ENCODE measurements at regions of chr17 and their contacts with region 1.

Region 1: DNA sequence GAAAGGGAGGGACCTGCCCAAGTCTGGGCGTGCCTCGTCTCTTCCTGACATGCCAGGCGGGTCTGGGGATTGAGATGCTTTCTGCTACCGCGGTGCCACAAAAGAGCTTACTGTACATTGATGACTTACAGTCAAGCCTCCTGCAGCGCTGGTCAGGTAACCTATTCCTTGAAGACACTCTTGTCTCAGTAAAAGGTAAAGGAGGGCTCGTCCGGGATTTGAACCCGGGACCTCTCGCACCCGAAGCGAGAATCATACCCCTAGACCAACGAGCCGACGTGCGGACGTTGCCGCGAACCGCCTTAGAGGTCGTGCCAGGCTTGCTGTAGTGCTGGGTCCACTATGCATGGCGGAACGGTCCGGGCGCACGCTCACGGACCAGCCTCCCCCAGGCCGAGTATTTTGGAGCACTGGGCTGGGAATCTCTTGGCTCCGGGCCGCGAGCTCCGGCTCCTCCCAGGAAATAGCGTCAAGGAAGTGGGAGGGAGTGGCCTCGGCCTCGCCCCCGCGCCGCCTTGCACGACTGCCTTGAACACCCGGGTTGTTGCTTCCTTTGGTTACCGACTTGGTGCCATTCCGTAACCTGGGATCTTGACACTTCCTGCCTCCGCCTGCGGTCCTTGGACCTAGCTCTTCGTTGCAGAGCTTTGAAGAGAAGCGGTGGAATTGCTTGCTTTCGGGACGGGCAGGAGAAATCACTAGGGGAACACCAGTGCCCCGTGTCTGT is 12.4 kb upstream of the AURKB start:
- DNase-seq: peak; percentile 88 to 92 (median 91)
- ATAC-seq: peak; percentile 66
- H3K4me3 ChIP-seq: peak overlapping the region; percentile 99
- H3K4me3 Mint-ChIP-seq: peak overlapping the region; percentile 86 to 99 (median 92)
- H3K27ac ChIP-seq: peak overlapping the region; percentile 83
- H3K27ac Mint-ChIP-seq: peak overlapping the region; percentile 95 to 100 (median 99)
- H3K4me1 ChIP-seq: peaks cover 23 to 26% of the 10 kb centered on the region in 2 donors
- H3K4me1 Mint-ChIP-seq: peaks cover 30 to 81% (median 70%) of the 10 kb centered on the region in 7 donors
- H3K27me3 ChIP-seq: no peaks in the 10 kb centered on the region
- H3K27me3 Mint-ChIP-seq: peaks cover 0 to 17% (median 0%) of the 10 kb centered on the region in 5 donors

Region 2: GRCh38 chr17:7745748-7746470 is 476.9 kb before region 1 on chr17:
- CTCF ChIA-PET with region 1: no interaction called
- POLR2A ChIA-PET with region 1: no interaction called
- intact Hi-C with region 1: no loop called
- DNase-seq: no peak
- ATAC-seq: no peak
- H3K4me3 ChIP-seq: no peak overlapping the region
- H3K4me3 Mint-ChIP-seq: no peak overlapping the region
- H3K27ac ChIP-seq: no peak overlapping the region
- H3K27ac Mint-ChIP-seq: no peak overlapping the region
- H3K4me1 ChIP-seq: no peaks in the 10 kb centered on the region
- H3K4me1 Mint-ChIP-seq: peaks cover 0 to 2% (median 0%) of the 10 kb centered on the region in 7 donors
- H3K27me3 ChIP-seq: no peaks in the 10 kb centered on the region
- H3K27me3 Mint-ChIP-seq: peaks cover 2 to 18% (median 10%) of the 10 kb centered on the region in 5 donors

Region 3: DNA sequence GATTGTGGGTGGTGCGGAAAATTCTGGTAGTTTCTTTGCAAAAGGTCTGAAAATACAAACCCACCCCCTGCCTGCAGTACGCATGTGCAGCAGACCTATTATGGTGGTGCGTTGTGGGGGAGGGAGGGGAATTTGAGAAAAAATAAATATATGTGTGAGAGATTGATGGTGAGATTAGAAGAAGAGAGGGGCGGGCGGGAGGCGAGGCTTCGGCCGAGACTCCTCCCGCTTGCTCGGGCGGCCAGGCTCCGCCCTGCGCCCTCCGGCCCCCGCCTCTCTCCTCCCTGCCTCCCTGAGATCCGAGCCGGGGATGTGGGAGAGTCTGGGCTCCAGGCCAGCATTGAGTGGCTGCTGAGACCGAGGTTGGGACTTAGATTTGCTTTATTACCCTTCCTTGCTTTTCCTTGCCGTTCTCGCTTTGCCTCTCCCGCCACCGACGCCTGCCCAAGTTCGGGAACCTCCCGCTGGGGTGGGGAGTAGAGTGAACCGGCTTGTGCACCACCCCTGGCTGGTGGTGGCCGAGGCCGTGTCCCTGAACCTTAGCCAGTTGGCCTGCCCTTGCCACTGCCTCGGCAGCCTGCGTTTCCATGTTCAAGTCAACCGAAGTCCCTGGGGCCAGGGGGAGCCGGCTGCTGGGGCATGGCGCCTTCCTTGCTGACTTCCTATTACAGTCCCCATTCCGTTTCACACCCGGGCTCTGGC is 335.2 kb before region 1 on chr17:
- CTCF ChIA-PET with region 1: no interaction called
- POLR2A ChIA-PET with region 1: no interaction called
- intact Hi-C with region 1: loop called in 1 of 2 experiments (anchors 10 kb)
- DNase-seq: peak; percentile 41 to 96 (median 93)
- ATAC-seq: peak; percentile 83
- H3K4me3 ChIP-seq: peak overlapping the region; percentile 61
- H3K4me3 Mint-ChIP-seq: no peak overlapping the region
- H3K27ac ChIP-seq: peak overlapping the region; percentile 91
- H3K27ac Mint-ChIP-seq: no peak overlapping the region
- H3K4me1 ChIP-seq: peaks cover 28 to 29% of the 10 kb centered on the region in 2 donors
- H3K4me1 Mint-ChIP-seq: peaks cover 0 to 17% (median 8%) of the 10 kb centered on the region in 7 donors
- H3K27me3 ChIP-seq: no peaks in the 10 kb centered on the region
- H3K27me3 Mint-ChIP-seq: no peaks in the 10 kb centered on the region

Region 4: DNA sequence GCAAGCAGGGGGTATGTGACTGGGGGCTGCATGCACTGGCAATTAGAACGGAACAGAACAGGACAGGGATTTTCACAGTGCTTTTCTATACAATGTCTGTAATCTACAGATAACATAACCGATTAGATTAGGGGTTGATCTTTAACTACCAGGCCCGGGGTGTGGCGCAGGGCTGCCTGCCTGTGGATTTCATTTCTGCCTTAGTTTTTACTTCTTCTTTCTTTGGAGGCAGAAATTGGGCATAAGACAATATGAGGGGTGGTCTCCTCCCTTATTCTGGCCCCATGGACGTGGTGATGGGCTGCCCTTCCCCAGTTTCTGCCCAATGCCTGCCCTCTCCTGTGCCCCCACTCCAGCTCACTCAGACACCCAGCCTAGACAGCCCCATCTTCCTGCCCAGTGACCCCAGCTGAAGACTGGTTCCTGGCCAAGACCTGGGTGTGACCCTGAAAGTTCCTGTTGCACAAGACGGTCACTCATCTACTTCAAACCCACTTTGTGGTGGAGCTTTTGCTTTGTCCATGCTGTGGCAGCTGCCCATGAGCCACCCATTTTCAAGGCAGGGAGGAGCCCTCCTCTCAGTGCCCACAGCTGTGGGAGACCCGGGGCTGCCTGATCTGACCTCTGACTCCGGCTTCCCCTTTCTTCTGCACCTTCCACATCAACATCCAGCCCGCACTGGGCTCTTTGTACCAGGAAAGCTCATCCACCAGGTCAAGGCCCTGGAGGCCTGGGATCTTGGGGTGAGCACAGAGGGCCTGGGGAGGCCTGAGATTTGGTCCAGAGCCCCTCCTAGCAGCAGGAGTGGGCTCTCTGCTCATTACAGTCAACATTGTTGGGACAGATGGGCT is 153.8 kb before region 1 on chr17:
- CTCF ChIA-PET with region 1: no interaction called
- POLR2A ChIA-PET with region 1: no interaction called
- intact Hi-C with region 1: no loop called
- DNase-seq: no peak
- ATAC-seq: peak; percentile 77
- H3K4me3 ChIP-seq: no peak overlapping the region
- H3K4me3 Mint-ChIP-seq: no peak overlapping the region
- H3K27ac ChIP-seq: no peak overlapping the region
- H3K27ac Mint-ChIP-seq: peak overlapping the region in 2 of 9 donors; percentile 30 to 37
- H3K4me1 ChIP-seq: peaks cover 4 to 17% of the 10 kb centered on the region in 2 donors
- H3K4me1 Mint-ChIP-seq: peaks cover 7 to 20% (median 17%) of the 10 kb centered on the region in 7 donors
- H3K27me3 ChIP-seq: peaks cover 0 to 6% of the 10 kb centered on the region in 2 donors
- H3K27me3 Mint-ChIP-seq: peaks cover 6 to 65% (median 20%) of the 10 kb centered on the region in 5 donors

Region 5: GRCh38 chr17:8151123-8151640 is 71.6 kb before region 1 on chr17:
- CTCF ChIA-PET with region 1: interaction called, 5 read pairs
- POLR2A ChIA-PET with region 1: interaction called, 154 read pairs
- intact Hi-C with region 1: loop called (anchors 1 to 2 kb)
- DNase-seq: peak; percentile 89 to 96 (median 93)
- ATAC-seq: peak; percentile 67
- H3K4me3 ChIP-seq: peak overlapping the region; percentile 80
- H3K4me3 Mint-ChIP-seq: peak overlapping the region in 6 of 10 donors; percentile 64 to 95 (median 91)
- H3K27ac ChIP-seq: peak overlapping the region; percentile 95
- H3K27ac Mint-ChIP-seq: peak overlapping the region in 2 of 9 donors; percentile 96 to 99
- H3K4me1 ChIP-seq: peaks cover 50 to 53% of the 10 kb centered on the region in 2 donors
- H3K4me1 Mint-ChIP-seq: peaks cover 0 to 68% (median 45%) of the 10 kb centered on the region in 7 donors
- H3K27me3 ChIP-seq: no peaks in the 10 kb centered on the region
- H3K27me3 Mint-ChIP-seq: no peaks in the 10 kb centered on the region

Region 6: DNA sequence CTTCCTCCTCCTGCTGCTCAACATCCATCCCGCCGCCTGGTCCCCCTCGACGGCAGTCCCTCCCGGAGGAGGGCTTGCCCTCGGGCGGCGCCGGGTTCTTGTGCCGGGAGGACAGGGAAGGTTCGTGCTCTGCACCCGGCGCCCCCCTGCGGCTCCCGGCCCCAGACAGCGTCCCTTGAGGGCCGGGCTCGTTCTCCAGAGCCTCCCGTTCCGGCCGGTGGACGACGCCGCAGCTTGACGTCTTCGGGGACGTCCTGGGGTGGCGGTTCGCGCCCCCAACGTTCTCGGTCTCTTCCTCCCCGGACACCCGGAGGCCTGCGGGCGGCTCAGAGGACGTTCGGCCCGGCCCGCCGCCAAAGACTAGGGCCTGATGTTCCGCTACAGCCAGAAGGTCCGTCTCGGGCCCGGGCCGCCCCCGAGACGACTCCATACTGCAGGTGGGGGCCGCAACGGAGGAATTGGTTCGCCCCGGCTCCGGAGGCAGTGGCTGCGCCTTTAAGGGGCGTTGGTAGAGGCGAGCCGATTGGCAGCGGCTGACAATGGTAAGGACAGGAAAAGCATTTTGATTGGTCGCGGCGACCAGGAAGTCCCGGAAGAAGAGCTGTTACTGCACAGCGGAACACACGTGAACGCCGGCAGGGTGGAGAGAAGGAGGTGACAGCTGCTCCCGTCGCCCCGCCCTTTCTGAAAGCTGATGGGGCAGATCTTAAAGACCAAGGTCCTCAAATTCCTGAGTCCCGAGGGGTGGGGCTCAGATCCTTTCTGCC is 32.9 kb before region 1 on chr17 and contains the start of gene BORCS6:
- CTCF ChIA-PET with region 1: interaction called, 33 read pairs
- POLR2A ChIA-PET with region 1: interaction called, 389 read pairs
- intact Hi-C with region 1: loop called (anchors 1 kb)
- DNase-seq: peak; percentile 76 to 97 (median 94)
- ATAC-seq: peak; percentile 81
- H3K4me3 ChIP-seq: peak within 1 kb of the TSS; percentile 91
- H3K4me3 Mint-ChIP-seq: peak within 1 kb of the TSS in 2 of 10 donors; percentile 15 to 49
- H3K27ac ChIP-seq: peak within 1 kb of the TSS; percentile 87
- H3K27ac Mint-ChIP-seq: peak within 1 kb of the TSS in 7 of 9 donors; percentile 46 to 94 (median 88)
- H3K4me1 ChIP-seq: peaks cover 33 to 38% of the 10 kb centered on the region in 2 donors
- H3K4me1 Mint-ChIP-seq: peaks cover 8 to 13% (median 13%) of the 10 kb centered on the region in 7 donors
- H3K27me3 ChIP-seq: no peaks in the 10 kb centered on the region
- H3K27me3 Mint-ChIP-seq: no peaks in the 10 kb centered on the region
- total RNA-seq, gene BORCS6: 5.4 to 16.1 (median 13.4) TPM

Region 7: GRCh38 chr17:8248751-8249607 is 26.2 kb after region 1 on chr17 and contains the start of gene PFAS:
- CTCF ChIA-PET with region 1: interaction called, 70 read pairs
- POLR2A ChIA-PET with region 1: interaction called, 436 read pairs
- intact Hi-C with region 1: loop called (anchors 1 kb)
- DNase-seq: peak; percentile 91 to 98 (median 94)
- ATAC-seq: peak; percentile 64
- H3K4me3 ChIP-seq: peak within 1 kb of the TSS; percentile 94
- H3K4me3 Mint-ChIP-seq: peak within 1 kb of the TSS; percentile 92 to 100 (median 99)
- H3K27ac ChIP-seq: peak within 1 kb of the TSS; percentile 100
- H3K27ac Mint-ChIP-seq: peak within 1 kb of the TSS; percentile 97 to 100 (median 100)
- H3K4me1 ChIP-seq: peaks cover 28 to 35% of the 10 kb centered on the region in 2 donors
- H3K4me1 Mint-ChIP-seq: peaks cover 30 to 56% (median 50%) of the 10 kb centered on the region in 7 donors
- H3K27me3 ChIP-seq: no peaks in the 10 kb centered on the region
- H3K27me3 Mint-ChIP-seq: no peaks in the 10 kb centered on the region
- total RNA-seq, gene PFAS: 31.6 to 68.9 (median 31.9) TPM

Region 8: GRCh38 chr17:8275421-8276290 is 52.9 kb after region 1 on chr17:
- CTCF ChIA-PET with region 1: no interaction called
- POLR2A ChIA-PET with region 1: no interaction called
- intact Hi-C with region 1: no loop called
- DNase-seq: no peak
- ATAC-seq: no peak
- H3K4me3 ChIP-seq: no peak overlapping the region
- H3K4me3 Mint-ChIP-seq: no peak overlapping the region
- H3K27ac ChIP-seq: no peak overlapping the region
- H3K27ac Mint-ChIP-seq: peak overlapping the region in 1 of 9 donors; percentile 62
- H3K4me1 ChIP-seq: no peaks in the 10 kb centered on the region
- H3K4me1 Mint-ChIP-seq: peaks cover 0 to 5% (median 0%) of the 10 kb centered on the region in 7 donors
- H3K27me3 ChIP-seq: no peaks in the 10 kb centered on the region
- H3K27me3 Mint-ChIP-seq: no peaks in the 10 kb centered on the region

Region 9: GRCh38 chr17:8435245-8436168 is 212.7 kb after region 1 on chr17 and contains the start of gene NDEL1:
- CTCF ChIA-PET with region 1: no interaction called
- POLR2A ChIA-PET with region 1: no interaction called
- intact Hi-C with region 1: loop called in 1 of 2 experiments (anchors 10 kb)
- DNase-seq: peak; percentile 97 to 99 (median 99)
- ATAC-seq: peak; percentile 95
- H3K4me3 ChIP-seq: peak within 1 kb of the TSS; percentile 81
- H3K4me3 Mint-ChIP-seq: peak within 1 kb of the TSS; percentile 94 to 99 (median 96)
- H3K27ac ChIP-seq: peak within 1 kb of the TSS; percentile 100
- H3K27ac Mint-ChIP-seq: peak within 1 kb of the TSS; percentile 96 to 100 (median 98)
- H3K4me1 ChIP-seq: peaks cover 10 to 22% of the 10 kb centered on the region in 2 donors
- H3K4me1 Mint-ChIP-seq: peaks cover 9 to 46% (median 37%) of the 10 kb centered on the region in 7 donors
- H3K27me3 ChIP-seq: no peaks in the 10 kb centered on the region
- H3K27me3 Mint-ChIP-seq: no peaks in the 10 kb centered on the region
- total RNA-seq, gene NDEL1: 72.6 to 274 (median 116) TPM

Measured in naive thymus-derived CD4-positive, alpha-beta T cell (primary cell).